Gastrocnemius medialis (tissue), 4 donors: ENCODE measurements at regions of chr4 and their contacts with region 1.

Region 1: DNA sequence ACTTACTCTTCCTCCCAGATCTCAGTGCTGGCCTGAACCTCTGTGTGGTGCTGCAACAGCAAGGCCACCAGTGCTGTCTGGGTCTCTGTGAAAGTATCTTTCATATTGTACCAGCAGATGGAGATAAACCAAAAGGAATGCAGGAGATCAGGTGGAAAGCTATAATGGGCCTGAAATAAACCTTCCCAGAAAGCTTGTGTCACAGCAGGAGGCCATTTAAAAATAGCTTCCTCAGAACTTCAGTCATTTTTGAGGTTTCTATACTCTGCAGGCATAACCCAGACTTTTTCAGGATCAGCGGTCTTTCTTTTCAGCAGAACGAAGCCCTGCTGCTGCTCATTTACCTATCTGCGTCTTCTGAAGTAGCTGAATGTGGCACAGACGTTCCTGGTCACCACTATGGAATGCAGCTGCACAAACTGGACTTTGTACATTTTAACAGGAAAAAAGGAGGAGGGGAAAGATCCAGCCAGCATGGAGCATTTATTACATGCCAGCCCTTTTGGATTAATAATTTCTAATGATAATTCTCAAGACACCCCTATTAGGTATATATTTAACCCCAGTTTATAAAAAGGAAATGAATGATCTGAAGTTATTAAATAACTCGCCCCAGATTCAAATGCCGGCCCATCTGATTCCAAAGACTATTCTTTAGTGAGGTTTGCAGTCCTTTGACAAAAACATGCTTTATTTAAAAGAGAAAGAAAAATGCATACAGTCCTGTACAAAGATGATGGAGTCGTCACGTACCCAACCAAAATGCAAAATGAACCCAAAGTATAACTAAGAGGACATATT is 119.7 kb downstream of the NFKB1 start:
- DNase-seq: peak in 1 of 2 donors; percentile 28
- ATAC-seq: peak; percentile 97 to 100
- H3K4me3 ChIP-seq: no peak overlapping the region
- H3K27ac ChIP-seq: peak overlapping the region in 3 of 4 donors; percentile 8 to 47 (median 16)
- H3K4me1 ChIP-seq: peaks cover 0 to 4% of the 10 kb centered on the region in 2 donors
- H3K27me3 ChIP-seq: no peaks in the 10 kb centered on the region
- CTCF ChIP-seq: peak; percentile 38 to 66 (median 55)
- POLR2A ChIP-seq: no peak

Region 2: GRCh38 chr4:102449751-102450352 is 171.0 kb before region 1 on chr4:
- in situ Hi-C with region 1: loop called in 3 of 4 experiments (anchors 10 to 25 kb)
- intact Hi-C with region 1: loop called (anchors 10 kb)
- DNase-seq: no peak
- ATAC-seq: peak; percentile 68 to 75
- H3K4me3 ChIP-seq: no peak overlapping the region
- H3K27ac ChIP-seq: no peak overlapping the region
- H3K4me1 ChIP-seq: no peaks in the 10 kb centered on the region
- H3K27me3 ChIP-seq: no peaks in the 10 kb centered on the region
- CTCF ChIP-seq: peak; percentile 27 to 68 (median 42)
- POLR2A ChIP-seq: no peak